ENCODE measurements at regions of chr4 and their contacts with region 1.

Region 1: GRCh38 chr4:2761035-2761923 is 5.1 kb upstream of the TNIP2 start:
- DNase-seq: no peak
- ATAC-seq: no peak
- H3K4me3 ChIP-seq: no peak overlapping the region
- H3K27ac ChIP-seq: no peak overlapping the region
- H3K4me1 ChIP-seq: peaks cover 4% of the 10 kb centered on the region; the same call in 1 of the 2 replicates
- H3K27me3 ChIP-seq: no peaks in the 10 kb centered on the region
- CTCF ChIP-seq: 0 out of 2 replicates have a peak, but pooled peaks have one; percentile 10
- POLR2A ChIP-seq: no peak
- RAD21 ChIP-seq: no peak

Region 2: GRCh38 chr4:2843263-2843940 is 82.1 kb after region 1 on chr4 and contains the start of gene ADD1:
- CTCF ChIA-PET with region 1: interaction called, 3 read pairs
- POLR2A ChIA-PET with region 1: no interaction called
- dilution Hi-C with region 1: no loop called
- in situ Hi-C with region 1: no loop called
- intact Hi-C with region 1: loop called (anchors 1 kb)
- DNase-seq: peak; percentile 91
- ATAC-seq: peak; percentile 93
- H3K4me3 ChIP-seq: peak within 1 kb of the TSS; percentile 77
- H3K27ac ChIP-seq: peak within 1 kb of the TSS; percentile 93
- H3K4me1 ChIP-seq: peaks cover 9% of the 10 kb centered on the region
- H3K27me3 ChIP-seq: no peaks in the 10 kb centered on the region
- CTCF ChIP-seq: no peak
- POLR2A ChIP-seq: peak; percentile 41; the same call in 1 of the 2 replicates
- RAD21 ChIP-seq: no peak
- total RNA-seq, gene ADD1: 117 and 122 TPM in 2 replicates

Region 3: GRCh38 chr4:2862528-2862927 is 101.2 kb after region 1 on chr4:
- CTCF ChIA-PET with region 1: no interaction called
- POLR2A ChIA-PET with region 1: no interaction called
- dilution Hi-C with region 1: no loop called
- in situ Hi-C with region 1: no loop called
- intact Hi-C with region 1: loop called (anchors 2 kb)
- DNase-seq: peak; percentile 41
- ATAC-seq: peak; percentile 31
- H3K4me3 ChIP-seq: no peak overlapping the region
- H3K27ac ChIP-seq: no peak overlapping the region
- H3K4me1 ChIP-seq: peaks cover 43% of the 10 kb centered on the region
- H3K27me3 ChIP-seq: no peaks in the 10 kb centered on the region
- CTCF ChIP-seq: no peak
- POLR2A ChIP-seq: no peak
- RAD21 ChIP-seq: no peak

Region 4: GRCh38 chr4:2891294-2891693 is 130.0 kb after region 1 on chr4:
- CTCF ChIA-PET with region 1: no interaction called
- POLR2A ChIA-PET with region 1: no interaction called
- dilution Hi-C with region 1: no loop called
- in situ Hi-C with region 1: no loop called
- intact Hi-C with region 1: loop called (anchors 5 kb)
- DNase-seq: peak; percentile 73
- ATAC-seq: peak; percentile 70
- H3K4me3 ChIP-seq: no peak overlapping the region
- H3K27ac ChIP-seq: no peak overlapping the region; the same call in 1 of the 2 replicates
- H3K4me1 ChIP-seq: peaks cover 7% of the 10 kb centered on the region
- H3K27me3 ChIP-seq: no peaks in the 10 kb centered on the region
- CTCF ChIP-seq: no peak
- POLR2A ChIP-seq: no peak
- RAD21 ChIP-seq: no peak

Region 5: GRCh38 chr4:2934813-2935761 is 173.8 kb after region 1 on chr4:
- CTCF ChIA-PET with region 1: no interaction called
- POLR2A ChIA-PET with region 1: no interaction called
- dilution Hi-C with region 1: no loop called
- in situ Hi-C with region 1: no loop called
- intact Hi-C with region 1: loop called (anchors 2 kb)
- DNase-seq: peak; percentile 85
- ATAC-seq: peak; percentile 62
- H3K4me3 ChIP-seq: peak overlapping the region; percentile 95
- H3K27ac ChIP-seq: peak overlapping the region; percentile 94
- H3K4me1 ChIP-seq: peaks cover 16% of the 10 kb centered on the region
- H3K27me3 ChIP-seq: no peaks in the 10 kb centered on the region
- CTCF ChIP-seq: no peak
- POLR2A ChIP-seq: peak; percentile 90
- RAD21 ChIP-seq: no peak

Region 6: GRCh38 chr4:3037957-3038461 is 276.7 kb after region 1 on chr4:
- CTCF ChIA-PET with region 1: no interaction called
- POLR2A ChIA-PET with region 1: no interaction called
- dilution Hi-C with region 1: no loop called
- in situ Hi-C with region 1: loop called (anchors 25 kb)
- intact Hi-C with region 1: loop called (anchors 5 kb)
- DNase-seq: no peak
- ATAC-seq: no peak
- H3K4me3 ChIP-seq: no peak overlapping the region
- H3K27ac ChIP-seq: no peak overlapping the region
- H3K4me1 ChIP-seq: peaks cover 2% of the 10 kb centered on the region; the same call in 1 of the 2 replicates
- H3K27me3 ChIP-seq: peaks cover 25% of the 10 kb centered on the region
- CTCF ChIP-seq: no peak
- POLR2A ChIP-seq: no peak
- RAD21 ChIP-seq: no peak